MCF 10A (cell line): ENCODE measurements at regions of chr12 and their contacts with region 1.

Region 1: DNA sequence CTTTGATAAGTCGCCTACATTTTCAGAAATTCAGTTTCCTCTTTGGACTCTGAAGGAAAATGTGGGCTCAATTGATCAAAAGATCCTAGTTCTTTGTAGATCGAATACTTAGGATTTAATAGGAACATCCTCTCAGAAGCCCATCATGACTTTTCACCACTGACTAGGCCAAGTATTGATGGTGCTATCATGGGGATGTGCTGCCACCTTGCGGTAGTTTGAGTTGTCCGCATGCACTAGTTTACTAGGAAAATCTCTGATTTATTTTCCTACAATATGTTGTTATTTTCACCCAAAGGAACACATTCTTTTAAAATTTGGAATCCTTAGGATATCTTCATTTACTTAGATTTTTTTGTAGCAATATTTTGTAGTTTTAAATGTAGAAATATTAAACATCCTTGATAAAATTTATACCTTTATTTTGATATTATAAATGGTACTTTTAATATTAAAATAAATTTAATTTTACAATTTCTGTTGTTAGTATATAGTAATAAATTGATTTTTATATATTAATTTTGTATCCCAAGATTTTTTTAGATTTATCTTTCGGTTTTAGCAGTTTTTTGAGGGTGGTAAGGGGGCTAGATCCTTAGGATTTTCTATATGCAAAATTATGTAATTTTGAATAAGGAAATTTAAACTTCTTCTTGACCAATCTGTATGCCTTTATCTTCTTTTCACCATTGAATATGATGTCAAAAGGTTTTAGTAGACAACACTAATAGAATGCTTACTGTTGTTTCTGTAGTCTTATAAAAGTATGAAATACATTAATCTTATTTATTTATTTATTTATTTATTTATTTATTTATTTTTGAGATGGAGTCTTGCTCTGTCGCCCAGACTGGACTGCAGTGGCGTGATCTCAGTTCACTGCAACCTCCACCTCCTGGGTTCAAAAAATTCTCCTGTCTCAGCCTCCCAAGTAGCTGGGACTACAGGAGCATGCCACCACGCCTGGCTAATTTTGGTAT is 52.9 kb upstream of the OR9K2 start:
- DNase-seq: peak; percentile 78
- H3K4me3 Mint-ChIP-seq: no peak overlapping the region
- H3K27ac Mint-ChIP-seq: no peak overlapping the region
- H3K4me1 Mint-ChIP-seq: no peaks in the 10 kb centered on the region
- H3K27me3 Mint-ChIP-seq: peaks cover 45% of the 10 kb centered on the region
- CTCF ChIP-seq: peak; percentile 73

Region 2: DNA sequence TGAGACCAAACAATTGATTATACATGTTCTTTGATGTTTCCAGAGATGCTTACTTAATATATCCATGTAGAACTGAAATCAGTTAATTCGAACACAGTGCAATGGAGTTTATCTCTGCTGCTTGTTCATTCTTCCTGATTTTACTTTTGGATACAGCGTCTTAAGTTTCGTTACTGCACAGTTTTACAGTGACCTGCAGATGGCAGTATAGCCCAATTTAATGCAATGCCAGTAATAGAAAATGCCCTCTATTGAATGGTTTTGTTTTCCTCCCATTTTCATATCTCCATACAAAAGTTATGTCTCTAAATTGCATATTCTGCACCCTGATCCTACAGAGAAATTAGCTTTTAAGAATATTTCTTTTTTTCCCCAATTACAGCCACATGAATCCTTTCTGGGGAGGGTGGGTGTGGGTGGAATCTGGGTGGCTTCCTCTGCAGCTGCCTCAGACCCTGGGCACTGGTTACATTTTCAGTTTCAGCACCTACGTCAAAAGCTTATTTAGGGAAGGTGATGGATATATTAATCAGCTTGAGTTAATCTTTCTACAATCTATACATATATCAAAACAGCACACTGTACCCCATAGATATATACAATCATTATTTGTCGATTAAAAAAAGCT is 324.0 kb before region 1 on chr12:
- CTCF ChIA-PET with region 1: interaction called, 14 read pairs
- POLR2A ChIA-PET with region 1: no interaction called
- intact Hi-C with region 1: loop called (anchors 1 kb)
- DNase-seq: peak; percentile 64
- H3K4me3 Mint-ChIP-seq: no peak overlapping the region
- H3K27ac Mint-ChIP-seq: no peak overlapping the region
- H3K4me1 Mint-ChIP-seq: no peaks in the 10 kb centered on the region
- H3K27me3 Mint-ChIP-seq: peaks cover 45% of the 10 kb centered on the region
- CTCF ChIP-seq: peak; percentile 64

Region 3: GRCh38 chr12:54977155-54977554 is 96.2 kb before region 1 on chr12:
- CTCF ChIA-PET with region 1: interaction called, 11 read pairs
- POLR2A ChIA-PET with region 1: no interaction called
- intact Hi-C with region 1: no loop called
- DNase-seq: peak; percentile 3
- H3K4me3 Mint-ChIP-seq: no peak overlapping the region
- H3K27ac Mint-ChIP-seq: no peak overlapping the region
- H3K4me1 Mint-ChIP-seq: no peaks in the 10 kb centered on the region
- H3K27me3 Mint-ChIP-seq: peaks cover 62% of the 10 kb centered on the region
- CTCF ChIP-seq: no peak

Region 4: GRCh38 chr12:54998958-54999510 is 74.3 kb before region 1 on chr12:
- CTCF ChIA-PET with region 1: interaction called, 233 read pairs
- POLR2A ChIA-PET with region 1: no interaction called
- intact Hi-C with region 1: no loop called
- DNase-seq: no peak
- H3K4me3 Mint-ChIP-seq: no peak overlapping the region
- H3K27ac Mint-ChIP-seq: no peak overlapping the region
- H3K4me1 Mint-ChIP-seq: no peaks in the 10 kb centered on the region
- H3K27me3 Mint-ChIP-seq: peaks cover 92% of the 10 kb centered on the region
- CTCF ChIP-seq: no peak

Region 5: GRCh38 chr12:55142669-55143565 is 69.6 kb after region 1 on chr12:
- CTCF ChIA-PET with region 1: interaction called, 7 read pairs
- POLR2A ChIA-PET with region 1: no interaction called
- intact Hi-C with region 1: loop called (anchors 2 kb)
- DNase-seq: peak; percentile 67
- H3K4me3 Mint-ChIP-seq: no peak overlapping the region
- H3K27ac Mint-ChIP-seq: no peak overlapping the region
- H3K4me1 Mint-ChIP-seq: no peaks in the 10 kb centered on the region
- H3K27me3 Mint-ChIP-seq: peaks cover 59% of the 10 kb centered on the region
- CTCF ChIP-seq: peak; percentile 57